GM12878 (cell line): ENCODE measurements at regions of chr12 and their contacts with region 1.

Region 1: DNA sequence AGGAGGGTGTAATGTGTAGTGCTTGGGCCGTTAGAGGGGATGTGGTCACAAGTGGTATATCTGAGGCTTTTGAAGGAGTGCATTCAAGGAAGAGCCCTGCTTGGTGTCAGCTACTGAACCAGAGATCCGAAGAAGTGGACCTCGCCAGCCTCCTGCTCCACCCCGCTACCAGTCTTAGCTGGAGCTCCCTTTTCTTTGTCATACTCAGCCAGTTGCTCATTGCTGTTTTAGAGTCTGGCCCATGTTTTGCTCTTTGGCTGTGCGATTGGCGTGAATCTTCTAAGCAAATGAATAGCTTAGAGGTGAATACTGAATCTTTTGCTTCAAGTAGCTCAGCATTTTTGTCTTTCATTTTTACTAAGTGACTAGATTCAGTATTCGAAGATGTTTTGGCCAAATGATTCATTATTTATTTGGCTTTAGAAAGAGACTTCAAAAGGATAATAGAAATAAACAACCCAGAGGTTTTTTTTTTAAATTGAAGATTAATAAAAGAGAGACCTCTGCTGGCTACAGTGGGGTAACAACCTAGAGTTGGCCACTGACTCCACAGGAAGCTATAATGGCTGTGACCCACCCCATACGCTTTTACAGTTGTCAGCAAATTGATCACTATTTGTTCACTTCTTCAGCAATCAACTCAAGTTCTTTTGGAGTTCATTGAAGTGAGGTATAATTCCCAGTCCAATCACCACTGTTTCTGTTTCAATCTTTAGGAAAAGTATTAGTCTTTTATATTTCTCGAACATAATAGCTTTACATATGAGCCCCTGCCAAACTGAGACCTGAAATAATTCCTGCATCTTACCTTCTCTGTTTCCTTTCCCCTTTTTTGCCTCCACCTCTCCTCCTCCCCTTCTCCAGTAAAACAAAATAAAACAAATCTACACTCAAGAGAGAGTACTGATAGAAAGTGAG is 19.9 kb downstream of the CDKN1B start:
- DNase-seq: peak; percentile 45
- ATAC-seq: peak; percentile 95
- H3K4me3 ChIP-seq: peak overlapping the region; percentile 48; the same call in 1 of the 2 replicates
- H3K27ac ChIP-seq: peak overlapping the region; percentile 71
- H3K4me1 ChIP-seq: peaks cover 5% of the 10 kb centered on the region
- H3K27me3 ChIP-seq: no peaks in the 10 kb centered on the region
- CTCF ChIP-seq: peak; percentile 53 to 63 (median 58); a peak in 5 of 6 replicates
- EP300 ChIP-seq: 0 out of 4 replicates have a peak, but pooled peaks of 1 of the 2 experiments have one; percentile 8
- POLR2A ChIP-seq: peak; percentile 44; the same call in 1 of the 2 replicates
- RAD21 ChIP-seq: peak; percentile 62

Region 2: GRCh38 chr12:12147111-12147510 is 589.9 kb before region 1 on chr12:
- CTCF ChIA-PET with region 1: no interaction called
- POLR2A ChIA-PET with region 1: no interaction called
- RAD21 ChIA-PET with region 1: no interaction called
- SMC1A ChIA-PET with region 1: no interaction called
- in situ Hi-C with region 1: no loop called
- intact Hi-C with region 1: no loop called
- DNase-seq: no peak
- ATAC-seq: no peak
- H3K4me3 ChIP-seq: no peak overlapping the region
- H3K27ac ChIP-seq: no peak overlapping the region
- H3K4me1 ChIP-seq: no peaks in the 10 kb centered on the region
- H3K27me3 ChIP-seq: no peaks in the 10 kb centered on the region
- CTCF ChIP-seq: no peak
- EP300 ChIP-seq: no peak
- POLR2A ChIP-seq: no peak
- RAD21 ChIP-seq: no peak

Region 3: GRCh38 chr12:12334367-12335040 is 402.5 kb before region 1 on chr12:
- CTCF ChIA-PET with region 1: interaction called, 14 read pairs
- POLR2A ChIA-PET with region 1: no interaction called
- RAD21 ChIA-PET with region 1: interaction called, 4 read pairs
- SMC1A ChIA-PET with region 1: interaction called, 9 read pairs
- in situ Hi-C with region 1: no loop called
- intact Hi-C with region 1: no loop called
- DNase-seq: peak; percentile 19
- ATAC-seq: peak; percentile 90
- H3K4me3 ChIP-seq: no peak overlapping the region
- H3K27ac ChIP-seq: no peak overlapping the region
- H3K4me1 ChIP-seq: 0 out of 2 replicates have a peak, but pooled peaks cover 3% of the 10 kb centered on the region
- H3K27me3 ChIP-seq: no peaks in the 10 kb centered on the region
- CTCF ChIP-seq: peak; percentile 81 to 89 (median 82)
- EP300 ChIP-seq: no peak
- POLR2A ChIP-seq: no peak
- RAD21 ChIP-seq: peak; percentile 58

Region 4: DNA sequence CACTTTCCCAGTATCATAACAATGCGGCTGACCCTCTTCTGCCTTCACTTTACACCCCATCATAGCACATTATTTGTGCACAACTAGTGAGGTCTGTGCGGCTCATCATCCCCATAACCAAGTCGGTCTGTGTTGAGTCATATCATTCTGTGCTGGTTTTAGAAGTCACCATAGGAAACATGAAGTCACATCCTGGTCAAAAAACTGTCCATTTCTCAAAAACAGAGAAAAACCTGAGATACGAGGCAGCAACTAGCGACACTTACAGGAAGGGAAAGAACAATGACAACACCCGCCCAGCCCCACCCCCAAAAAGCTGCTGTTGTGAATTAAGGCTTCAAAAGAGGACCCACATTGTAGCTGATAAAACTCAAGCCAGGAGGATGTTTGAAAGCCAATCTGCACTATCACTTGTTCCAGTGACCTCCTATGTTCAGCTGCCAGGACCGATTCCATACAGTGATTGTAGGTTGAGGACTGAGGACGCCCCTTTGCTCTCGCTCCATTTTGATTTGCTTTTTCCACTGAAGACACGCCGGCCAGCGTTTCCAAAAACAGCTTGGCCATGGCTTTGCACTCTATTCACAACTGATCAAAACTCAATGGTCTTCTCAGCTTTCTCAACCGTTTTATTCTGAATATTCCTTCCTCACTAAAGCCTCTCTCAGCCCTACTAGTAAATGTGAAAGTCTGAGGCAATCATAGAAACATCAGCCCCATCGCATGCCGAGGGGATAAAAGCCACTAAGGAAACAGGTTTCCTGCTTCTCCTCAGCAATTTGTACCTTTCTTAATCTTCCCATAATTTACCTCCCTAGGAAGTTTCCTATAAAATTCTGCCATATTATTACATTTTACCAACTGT is 261.9 kb before region 1 on chr12:
- CTCF ChIA-PET with region 1: interaction called, 6 read pairs
- POLR2A ChIA-PET with region 1: no interaction called
- RAD21 ChIA-PET with region 1: interaction called, 19 read pairs
- SMC1A ChIA-PET with region 1: interaction called, 15 read pairs
- in situ Hi-C with region 1: no loop called
- intact Hi-C with region 1: no loop called
- DNase-seq: peak; percentile 87
- ATAC-seq: peak; percentile 98
- H3K4me3 ChIP-seq: 0 out of 2 replicates have a peak overlapping the region, but pooled peaks have one; percentile 30
- H3K27ac ChIP-seq: peak overlapping the region; percentile 94
- H3K4me1 ChIP-seq: peaks cover 24% of the 10 kb centered on the region
- H3K27me3 ChIP-seq: no peaks in the 10 kb centered on the region
- CTCF ChIP-seq: peak in 1 of 3 experiments; percentile 19; a peak in 1 of 6 replicates
- EP300 ChIP-seq: peak; percentile 82 to 88; a peak in 3 of 4 replicates
- POLR2A ChIP-seq: no peak
- RAD21 ChIP-seq: peak; percentile 61

Region 5: GRCh38 chr12:12582895-12583303 is 154.1 kb before region 1 on chr12:
- CTCF ChIA-PET with region 1: interaction called, 6 read pairs
- POLR2A ChIA-PET with region 1: no interaction called
- RAD21 ChIA-PET with region 1: interaction called, 3 read pairs
- SMC1A ChIA-PET with region 1: interaction called, 10 read pairs
- in situ Hi-C with region 1: no loop called
- intact Hi-C with region 1: no loop called
- DNase-seq: peak; percentile 100
- ATAC-seq: peak; percentile 92
- H3K4me3 ChIP-seq: no peak overlapping the region
- H3K27ac ChIP-seq: peak overlapping the region; percentile 94
- H3K4me1 ChIP-seq: peaks cover 44% of the 10 kb centered on the region
- H3K27me3 ChIP-seq: no peaks in the 10 kb centered on the region
- CTCF ChIP-seq: no peak
- EP300 ChIP-seq: peak; percentile 96 to 99
- POLR2A ChIP-seq: peak; percentile 36; the same call in 1 of the 2 replicates
- RAD21 ChIP-seq: 0 out of 2 replicates have a peak, but pooled peaks have one; percentile 17

Region 6: DNA sequence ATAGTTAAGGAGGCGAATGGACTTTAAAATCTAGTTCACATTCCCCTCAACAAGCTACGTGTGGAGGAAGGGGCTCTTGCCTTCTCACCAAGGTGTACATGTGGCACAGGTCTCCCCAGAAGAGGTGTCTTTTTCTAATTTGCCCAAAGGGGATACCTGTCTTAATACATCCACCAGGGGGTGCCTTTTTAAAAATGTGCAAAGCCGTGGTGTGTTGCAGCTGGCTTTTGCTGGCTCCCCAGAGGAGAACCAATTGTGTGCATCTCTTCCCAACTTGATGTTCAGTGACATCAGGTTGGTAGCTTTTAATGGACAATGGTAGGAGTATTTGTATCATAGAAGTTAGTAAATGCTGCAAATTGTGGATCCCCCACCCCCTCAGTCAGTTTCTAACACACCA is 91.5 kb before region 1 on chr12:
- CTCF ChIA-PET with region 1: interaction called, 79 read pairs
- POLR2A ChIA-PET with region 1: interaction called, 3 read pairs
- RAD21 ChIA-PET with region 1: interaction called, 32 read pairs
- SMC1A ChIA-PET with region 1: interaction called, 45 read pairs
- in situ Hi-C with region 1: no loop called
- intact Hi-C with region 1: no loop called
- DNase-seq: no peak
- ATAC-seq: peak; percentile 90
- H3K4me3 ChIP-seq: peak overlapping the region; percentile 14; the same call in 1 of the 2 replicates
- H3K27ac ChIP-seq: peak overlapping the region; percentile 76
- H3K4me1 ChIP-seq: peaks cover 20% of the 10 kb centered on the region
- H3K27me3 ChIP-seq: no peaks in the 10 kb centered on the region
- CTCF ChIP-seq: peak; percentile 38 to 70 (median 50)
- EP300 ChIP-seq: no peak
- POLR2A ChIP-seq: no peak
- RAD21 ChIP-seq: peak; percentile 59

Region 7: GRCh38 chr12:12696562-12697383 is 40.2 kb before region 1 on chr12:
- CTCF ChIA-PET with region 1: interaction called, 14 read pairs
- POLR2A ChIA-PET with region 1: interaction called, 12 read pairs
- RAD21 ChIA-PET with region 1: interaction called, 22 read pairs
- SMC1A ChIA-PET with region 1: interaction called, 27 read pairs
- in situ Hi-C with region 1: no loop called
- intact Hi-C with region 1: no loop called
- DNase-seq: peak; percentile 91
- ATAC-seq: peak; percentile 78
- H3K4me3 ChIP-seq: peak overlapping the region; percentile 77
- H3K27ac ChIP-seq: peak overlapping the region; percentile 99
- H3K4me1 ChIP-seq: peaks cover 35% of the 10 kb centered on the region
- H3K27me3 ChIP-seq: no peaks in the 10 kb centered on the region
- CTCF ChIP-seq: no peak
- EP300 ChIP-seq: peak; percentile 39 to 63; a peak in 2 of 4 replicates
- POLR2A ChIP-seq: peak; percentile 72
- RAD21 ChIP-seq: no peak

Region 8: GRCh38 chr12:12845025-12845787 is 108.2 kb after region 1 on chr12:
- CTCF ChIA-PET with region 1: no interaction called
- POLR2A ChIA-PET with region 1: no interaction called
- RAD21 ChIA-PET with region 1: no interaction called
- SMC1A ChIA-PET with region 1: no interaction called
- in situ Hi-C with region 1: no loop called
- intact Hi-C with region 1: no loop called
- DNase-seq: no peak
- ATAC-seq: no peak
- H3K4me3 ChIP-seq: no peak overlapping the region
- H3K27ac ChIP-seq: no peak overlapping the region
- H3K4me1 ChIP-seq: no peaks in the 10 kb centered on the region
- H3K27me3 ChIP-seq: no peaks in the 10 kb centered on the region
- CTCF ChIP-seq: no peak
- EP300 ChIP-seq: no peak
- POLR2A ChIP-seq: no peak
- RAD21 ChIP-seq: no peak

Region 9: DNA sequence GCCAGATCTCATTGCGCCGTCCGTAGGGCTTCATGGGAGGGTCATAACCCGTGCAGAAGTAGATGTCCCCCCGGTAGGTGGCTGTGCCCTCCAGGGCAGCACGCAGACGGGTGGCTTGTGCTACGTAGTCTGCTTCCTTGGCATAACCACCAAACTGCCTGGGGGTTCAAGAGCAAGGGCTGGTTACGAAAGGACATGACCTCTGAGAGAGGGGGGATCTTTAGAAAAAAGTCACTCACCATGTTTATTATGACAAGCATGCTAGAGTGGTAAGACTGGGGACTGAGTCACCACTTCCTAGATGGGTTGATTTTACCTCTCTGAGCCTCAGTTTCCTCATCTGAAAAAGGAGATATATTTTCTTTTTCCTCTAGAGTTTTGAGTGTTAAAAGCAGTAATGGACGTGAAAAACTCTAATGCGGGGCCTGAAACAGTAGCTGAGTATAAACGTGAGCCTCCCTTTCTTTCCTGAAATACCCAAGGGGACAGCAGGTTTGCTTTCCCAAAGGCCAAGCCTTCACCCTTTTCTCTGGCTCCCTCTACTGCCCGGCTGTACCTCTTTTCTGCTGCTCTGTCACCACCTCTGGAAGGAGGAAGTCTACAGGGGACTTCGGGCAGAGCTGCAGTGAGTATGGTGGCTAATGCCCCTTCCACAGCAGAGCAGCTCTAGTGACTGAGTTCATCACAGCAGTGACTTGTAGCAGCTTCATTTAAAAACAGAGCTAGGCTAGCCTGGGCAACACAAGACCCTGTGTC is 238.5 kb after region 1 on chr12:
- CTCF ChIA-PET with region 1: interaction called, 12 read pairs
- POLR2A ChIA-PET with region 1: no interaction called
- RAD21 ChIA-PET with region 1: no interaction called
- SMC1A ChIA-PET with region 1: no interaction called
- in situ Hi-C with region 1: no loop called
- intact Hi-C with region 1: no loop called
- DNase-seq: no peak
- ATAC-seq: peak; percentile 71
- H3K4me3 ChIP-seq: no peak overlapping the region
- H3K27ac ChIP-seq: no peak overlapping the region
- H3K4me1 ChIP-seq: no peaks in the 10 kb centered on the region
- H3K27me3 ChIP-seq: no peaks in the 10 kb centered on the region
- CTCF ChIP-seq: peak; percentile 23 to 53 (median 48); a peak in 4 of 6 replicates
- EP300 ChIP-seq: no peak
- POLR2A ChIP-seq: no peak
- RAD21 ChIP-seq: peak; percentile 38